ENCODE measurements at regions of chr5 and their contacts with region 1.

Region 1: GRCh38 chr5:141691867-141692532 is 10.0 kb upstream of the ARAP3 start:
- DNase-seq: peak; percentile 70 to 89 (median 87)
- H3K4me3 ChIP-seq: peak overlapping the region in 5 of 7 experiments; percentile 2 to 64 (median 48)
- H3K27ac ChIP-seq: no peak overlapping the region
- H3K4me1 ChIP-seq: peaks cover 0 to 5% (median 4%) of the 10 kb centered on the region in 4 experiments
- H3K27me3 ChIP-seq: peaks cover 0 to 19% (median 15%) of the 10 kb centered on the region in 5 experiments

Region 2: DNA sequence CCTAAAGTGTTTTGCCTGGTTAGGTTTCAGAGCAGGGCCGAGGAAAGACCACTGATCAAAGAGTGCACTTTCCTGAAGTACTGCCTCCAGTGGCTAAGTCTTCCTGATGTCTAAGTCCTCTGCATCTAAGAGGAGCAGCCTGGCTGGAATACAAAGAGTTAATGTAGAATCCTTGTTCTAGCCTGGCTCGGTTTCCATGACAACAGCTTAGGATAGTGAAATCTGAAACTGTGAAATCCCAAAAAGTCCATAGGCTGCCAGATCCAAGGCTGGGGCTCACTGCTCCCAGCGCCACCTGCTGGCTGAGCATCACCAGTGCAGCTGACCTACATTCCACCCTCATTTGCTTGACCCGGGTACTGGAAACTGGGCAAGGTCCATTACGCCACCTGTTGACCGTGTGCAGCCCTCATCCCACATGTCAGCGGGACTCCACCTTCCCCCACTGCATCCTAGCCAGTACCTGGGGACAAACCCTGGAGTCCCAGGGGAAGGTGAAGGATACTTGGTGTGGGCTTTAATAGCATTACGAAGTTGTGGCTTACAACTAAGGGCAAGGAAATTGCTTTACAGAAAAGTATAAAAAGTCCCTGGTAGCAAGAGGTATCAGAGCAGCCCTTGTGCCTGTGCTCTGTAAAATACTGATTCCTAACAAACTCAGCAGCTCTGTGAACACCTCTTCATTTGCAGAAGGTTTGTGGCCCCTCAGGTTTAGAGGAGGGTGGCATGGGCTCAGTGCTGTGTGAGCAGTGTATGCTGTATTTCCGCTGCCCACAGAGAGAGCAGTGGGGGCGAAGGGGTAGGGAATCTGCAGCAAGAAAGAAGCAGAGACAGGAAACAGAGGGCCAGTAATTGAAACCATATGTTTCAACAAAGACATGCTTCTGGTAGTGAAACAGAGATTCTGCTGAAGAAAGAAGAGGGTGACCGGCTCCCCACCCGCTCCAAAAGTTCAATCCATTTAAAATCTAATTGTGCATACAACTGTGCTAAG is 167.1 kb before region 1 on chr5:
- CTCF ChIA-PET with region 1: no interaction called
- POLR2A ChIA-PET with region 1: no interaction called
- DNase-seq: peak; percentile 63 to 78 (median 67)
- H3K4me3 ChIP-seq: no peak overlapping the region
- H3K27ac ChIP-seq: no peak overlapping the region
- H3K4me1 ChIP-seq: peaks cover 7 to 19% (median 8%) of the 10 kb centered on the region in 4 experiments
- H3K27me3 ChIP-seq: no peaks in the 10 kb centered on the region

Region 3: GRCh38 chr5:141636413-141637122 is 55.4 kb before region 1 on chr5 and contains the starts of genes HDAC3 and RELL2:
- CTCF ChIA-PET with region 1: no interaction called
- POLR2A ChIA-PET with region 1: no interaction called
- DNase-seq: peak; percentile 82 to 89 (median 88)
- H3K4me3 ChIP-seq: peak within 1 kb of the TSS; percentile 79 to 99 (median 92)
- H3K27ac ChIP-seq: peak within 1 kb of the TSS; percentile 60 to 88
- H3K4me1 ChIP-seq: peaks cover 4 to 40% (median 30%) of the 10 kb centered on the region in 4 experiments
- H3K27me3 ChIP-seq: no peaks in the 10 kb centered on the region

Region 4: DNA sequence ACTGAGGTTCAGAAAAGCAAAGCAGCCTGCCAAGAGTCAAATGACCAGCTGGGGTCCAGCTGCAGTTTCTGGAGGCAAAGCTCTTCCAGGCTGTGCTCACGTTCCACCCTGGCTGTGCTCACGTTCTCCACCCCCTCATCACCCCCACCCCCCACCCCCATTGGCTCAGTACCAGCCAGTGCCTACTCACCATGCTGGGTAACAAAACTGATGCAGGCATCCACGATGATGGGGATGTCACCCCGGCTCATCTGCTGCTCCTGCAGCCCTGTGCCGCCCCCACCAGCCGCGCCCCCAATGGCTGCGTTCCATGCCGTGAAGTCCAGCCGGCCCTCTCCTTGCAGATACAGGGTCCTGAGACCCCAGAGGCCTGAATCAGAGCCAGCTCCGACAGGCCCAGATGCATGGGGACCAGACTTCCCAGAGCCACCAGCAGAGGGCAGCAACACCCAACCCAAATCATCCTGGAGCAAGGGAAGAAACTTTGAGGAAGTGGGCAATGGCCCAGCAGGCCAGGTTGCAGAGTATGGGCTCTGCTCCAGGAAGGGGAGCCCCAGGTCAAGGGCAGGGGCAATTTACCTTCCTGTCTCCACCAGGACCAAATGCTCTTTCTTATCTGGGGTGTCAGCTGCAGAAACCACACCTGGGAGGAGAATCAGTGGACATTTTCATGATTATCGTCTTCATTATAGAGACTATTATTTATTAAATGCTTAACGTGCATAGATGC is 27.1 kb before region 1 on chr5:
- CTCF ChIA-PET with region 1: interaction called, 13 read pairs
- POLR2A ChIA-PET with region 1: no interaction called
- DNase-seq: peak; percentile 80 to 90 (median 85)
- H3K4me3 ChIP-seq: peak overlapping the region in 1 of 7 experiments; percentile 28
- H3K27ac ChIP-seq: no peak overlapping the region
- H3K4me1 ChIP-seq: peaks cover 2 to 5% (median 3%) of the 10 kb centered on the region in 4 experiments
- H3K27me3 ChIP-seq: no peaks in the 10 kb centered on the region

Region 5: DNA sequence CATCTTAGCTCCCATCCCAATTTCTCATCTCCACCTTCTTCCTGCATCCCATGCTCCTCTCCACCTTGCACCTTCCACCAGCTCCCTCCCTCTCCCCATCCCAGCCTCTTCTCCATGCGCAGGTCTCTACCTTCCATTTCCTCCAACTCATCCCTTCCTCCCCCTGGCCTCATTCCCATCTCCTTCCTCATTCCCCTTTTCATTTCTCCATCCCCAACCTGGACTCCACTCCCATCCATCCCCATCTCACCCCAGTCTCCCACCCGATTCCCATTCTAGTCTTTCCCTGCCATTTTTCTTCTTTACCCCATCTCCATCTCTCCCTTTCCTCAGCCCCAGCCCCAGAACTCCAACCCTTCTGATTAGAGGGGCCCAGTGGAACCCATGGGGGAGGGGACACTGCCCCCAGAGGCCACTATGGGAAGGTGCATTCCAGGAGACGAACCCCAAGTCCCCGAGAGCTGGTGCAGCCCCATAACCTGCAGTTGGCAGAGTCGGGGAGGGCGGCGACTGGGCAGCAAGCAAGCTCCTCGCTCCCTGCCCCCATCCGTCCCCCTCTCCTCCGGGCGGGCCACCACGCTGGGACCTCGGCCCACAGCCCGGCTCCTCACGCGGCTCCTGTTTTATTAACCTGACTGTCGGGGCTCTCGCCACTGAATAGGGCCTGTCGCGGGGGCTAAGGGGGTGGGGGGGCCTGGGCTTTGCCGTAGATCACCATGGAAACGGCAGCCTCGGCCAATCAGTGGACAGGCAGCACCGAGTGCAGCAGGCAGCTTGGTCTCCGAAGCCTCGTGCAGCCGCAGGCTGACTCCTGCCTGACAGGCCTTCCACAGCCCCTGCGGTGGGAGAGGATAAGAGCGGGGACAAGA is 119.5 kb after region 1 on chr5:
- CTCF ChIA-PET with region 1: interaction called, 10 read pairs
- POLR2A ChIA-PET with region 1: no interaction called
- DNase-seq: peak; percentile 37 to 69 (median 64)
- H3K4me3 ChIP-seq: peak overlapping the region in 1 of 7 experiments; percentile 16
- H3K27ac ChIP-seq: no peak overlapping the region
- H3K4me1 ChIP-seq: no peaks in the 10 kb centered on the region
- H3K27me3 ChIP-seq: peaks cover 11 to 62% (median 17%) of the 10 kb centered on the region in 5 experiments

Region 6: DNA sequence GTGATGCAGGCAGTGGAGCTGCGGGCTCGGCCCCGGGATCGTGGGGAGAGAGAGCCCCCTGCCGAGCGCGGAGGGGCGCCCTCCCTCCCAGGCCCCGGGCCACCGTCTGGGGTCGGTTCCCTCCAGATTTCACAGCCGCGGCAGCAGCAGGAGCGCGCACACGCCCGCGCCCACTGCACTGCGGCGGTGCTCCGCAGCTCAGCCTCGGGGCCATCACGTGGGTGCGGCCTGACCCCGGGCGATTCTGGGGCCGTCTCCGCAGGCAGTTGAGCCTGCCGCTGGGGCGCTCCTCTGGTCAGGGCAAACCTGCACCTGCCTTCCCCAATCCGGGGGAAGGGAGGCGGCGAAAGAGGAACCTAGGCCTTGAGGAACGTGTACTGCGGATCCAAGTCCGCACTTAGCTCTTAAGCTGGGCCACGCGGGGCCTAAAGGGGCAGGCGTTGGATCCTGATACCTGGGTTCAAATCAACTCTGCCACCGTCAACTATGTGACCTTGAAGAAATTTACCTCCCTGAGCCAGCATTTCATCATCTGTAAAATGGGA is 222.3 kb after region 1 on chr5:
- CTCF ChIA-PET with region 1: interaction called, 11 read pairs
- POLR2A ChIA-PET with region 1: no interaction called
- DNase-seq: peak; percentile 55 to 82 (median 74)
- H3K4me3 ChIP-seq: peak overlapping the region in 6 of 7 experiments; percentile 30 to 71 (median 58)
- H3K27ac ChIP-seq: no peak overlapping the region
- H3K4me1 ChIP-seq: peaks cover 5 to 14% (median 12%) of the 10 kb centered on the region in 4 experiments
- H3K27me3 ChIP-seq: peaks cover 0 to 8% (median 4%) of the 10 kb centered on the region in 5 experiments

Region 7: DNA sequence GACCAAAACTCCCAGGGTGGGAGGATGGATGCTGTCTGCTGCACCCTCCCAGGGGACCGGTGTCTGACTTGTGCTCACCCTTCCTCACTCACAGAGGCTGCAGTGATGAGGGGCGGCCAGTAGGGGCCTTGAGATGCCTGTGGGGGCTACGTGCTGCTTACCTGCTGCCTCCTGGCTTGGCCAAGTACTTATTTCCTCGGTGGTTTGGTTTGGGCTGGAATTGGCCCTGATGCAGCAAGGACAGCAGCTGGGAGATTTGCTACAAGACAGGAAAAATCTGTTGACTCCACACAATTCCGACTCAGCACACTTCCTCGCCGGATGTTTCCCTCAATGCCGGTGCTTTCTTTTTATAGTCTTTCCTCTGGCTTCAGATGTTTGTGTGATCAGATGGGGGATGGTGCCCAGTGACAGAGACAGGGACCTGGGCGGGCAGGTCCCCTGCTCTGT is 259.4 kb after region 1 on chr5:
- CTCF ChIA-PET with region 1: interaction called, 127 read pairs
- POLR2A ChIA-PET with region 1: no interaction called
- DNase-seq: peak in 2 of 3 donors; percentile 38 to 58
- H3K4me3 ChIP-seq: no peak overlapping the region
- H3K27ac ChIP-seq: no peak overlapping the region
- H3K4me1 ChIP-seq: peaks cover 5 to 29% (median 22%) of the 10 kb centered on the region in 4 experiments
- H3K27me3 ChIP-seq: no peaks in the 10 kb centered on the region